PC-9 (cell line): ENCODE measurements at regions of chr5 and their contacts with region 1.

Region 1: DNA sequence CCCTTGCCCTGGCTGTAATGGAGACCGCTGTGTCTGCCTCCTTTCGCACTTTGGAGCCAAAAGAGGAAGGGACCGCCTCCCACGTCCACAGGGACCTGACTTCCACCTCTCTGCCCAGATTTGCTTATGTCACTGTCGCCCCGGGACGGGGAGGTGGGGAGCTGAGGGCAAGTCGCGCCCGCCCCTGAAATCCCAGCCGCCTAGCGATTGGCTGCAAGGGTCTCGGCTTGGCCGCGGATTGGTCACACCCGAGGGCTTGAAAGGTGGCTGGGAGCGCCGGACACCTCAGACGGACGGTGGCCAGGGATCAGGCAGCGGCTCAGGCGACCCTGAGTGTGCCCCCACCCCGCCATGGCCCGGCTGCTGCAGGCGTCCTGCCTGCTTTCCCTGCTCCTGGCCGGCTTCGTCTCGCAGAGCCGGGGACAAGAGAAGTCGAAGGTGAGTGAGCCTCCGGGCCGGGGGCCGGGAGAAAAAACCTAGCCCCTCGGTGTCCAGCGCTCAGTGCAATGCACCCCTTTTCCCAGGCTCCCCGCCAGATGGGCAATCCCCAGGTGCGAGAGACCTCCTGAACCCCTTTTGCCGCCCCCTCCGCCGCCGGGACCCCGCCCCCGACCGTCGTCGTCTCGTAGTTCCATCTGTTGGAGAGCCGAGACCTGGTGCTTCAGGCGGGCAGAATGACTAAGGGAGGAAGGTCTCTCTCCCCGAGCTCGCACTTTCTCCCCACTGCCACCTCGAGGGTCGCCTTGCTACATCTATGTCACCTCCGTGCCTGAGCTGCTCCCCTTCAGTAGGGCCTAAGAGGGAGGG is at the start of gene GPX3:
- DNase-seq: peak; percentile 78 to 93
- H3K4me3 ChIP-seq: peak within 1 kb of the TSS; percentile 94
- H3K27ac ChIP-seq: no peak within 1 kb of the TSS
- H3K4me1 ChIP-seq: peaks cover 12% of the 10 kb centered on the region
- H3K27me3 ChIP-seq: no peaks in the 10 kb centered on the region
- CTCF ChIP-seq: no peak
- total RNA-seq, gene GPX3: 84.6 and 93.2 TPM in 2 replicates

Region 2: DNA sequence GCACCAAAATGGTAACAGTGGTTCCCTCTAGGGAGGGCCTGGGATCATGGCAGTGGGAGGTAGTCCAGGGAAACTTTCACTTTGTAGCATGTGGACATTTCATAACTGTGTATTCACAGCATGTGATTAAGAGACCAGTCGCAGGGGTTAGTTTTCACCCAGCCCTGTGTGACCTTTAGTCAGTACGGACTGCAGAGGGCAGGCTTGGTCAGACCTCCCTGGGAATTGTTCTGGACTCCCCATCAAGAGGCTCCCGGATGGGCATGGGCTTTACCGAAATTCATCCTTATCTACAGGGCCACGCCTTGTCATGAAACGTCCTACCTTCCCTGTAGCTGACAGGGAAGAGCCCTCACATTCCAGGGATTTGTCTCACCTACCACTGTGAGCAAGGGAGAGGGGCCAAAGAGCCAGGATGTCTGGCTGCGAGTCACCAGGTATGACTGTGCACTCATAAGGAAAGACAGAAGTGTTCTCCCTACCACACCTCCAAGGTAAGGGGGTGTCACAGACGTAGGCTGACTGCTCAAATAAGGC is 19.8 kb after region 1 on chr5:
- CTCF ChIA-PET with region 1: interaction called, 3 read pairs
- POLR2A ChIA-PET with region 1: no interaction called
- intact Hi-C with region 1: loop called (anchors 2 kb)
- DNase-seq: peak; percentile 63 to 85
- H3K4me3 ChIP-seq: no peak overlapping the region
- H3K27ac ChIP-seq: peak overlapping the region; percentile 89
- H3K4me1 ChIP-seq: peaks cover 47% of the 10 kb centered on the region
- H3K27me3 ChIP-seq: no peaks in the 10 kb centered on the region
- CTCF ChIP-seq: no peak